ENCODE measurements at regions of chr17 and their contacts with region 1.

Region 1: DNA sequence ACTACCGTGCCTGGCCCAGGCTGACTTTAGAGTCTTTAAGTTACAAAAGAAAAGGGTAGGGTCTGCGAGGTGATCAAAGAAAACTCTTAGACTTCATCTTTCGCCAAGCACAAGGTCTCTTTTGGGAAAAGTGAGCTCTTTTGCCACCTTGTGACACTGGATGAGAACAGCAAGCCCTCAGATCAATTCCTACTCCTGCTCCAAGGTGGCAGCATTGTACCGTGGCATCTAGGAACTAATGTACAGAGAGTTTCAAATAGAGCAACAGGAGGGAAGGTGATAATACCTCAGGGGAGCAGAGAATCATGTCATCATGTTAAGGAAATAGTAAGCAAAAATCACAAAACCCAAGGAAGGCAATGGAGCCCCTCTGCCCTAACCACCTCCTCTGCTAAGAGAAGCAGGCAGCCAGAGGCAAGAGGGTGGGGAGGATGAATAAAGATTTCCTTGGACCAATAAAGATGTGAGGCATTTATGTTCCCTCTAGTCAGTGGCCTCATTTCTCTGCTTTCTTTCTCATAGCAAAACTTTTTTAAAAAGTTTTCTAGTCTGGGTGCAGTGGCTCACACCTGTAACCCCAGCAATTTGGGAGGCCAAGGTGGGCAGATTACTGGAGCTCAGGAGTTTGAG is 2.1 kb upstream of the C17orf78 start:
- DNase-seq: no peak
- H3K4me3 ChIP-seq: no peak overlapping the region
- H3K27me3 ChIP-seq: no peaks in the 10 kb centered on the region
- CTCF ChIP-seq: peak; percentile 99

Region 2: GRCh38 chr17:37239690-37240334 is 133.8 kb before region 1 on chr17:
- CTCF ChIA-PET with region 1: interaction called, 11 read pairs
- POLR2A ChIA-PET with region 1: no interaction called
- DNase-seq: no peak
- H3K4me3 ChIP-seq: no peak overlapping the region
- H3K27me3 ChIP-seq: no peaks in the 10 kb centered on the region
- CTCF ChIP-seq: peak; percentile 73

Region 3: GRCh38 chr17:37384560-37385149 is 11.0 kb after region 1 on chr17:
- CTCF ChIA-PET with region 1: interaction called, 13 read pairs
- POLR2A ChIA-PET with region 1: no interaction called
- DNase-seq: no peak
- H3K4me3 ChIP-seq: no peak overlapping the region
- H3K27me3 ChIP-seq: no peaks in the 10 kb centered on the region
- CTCF ChIP-seq: no peak

Region 4: DNA sequence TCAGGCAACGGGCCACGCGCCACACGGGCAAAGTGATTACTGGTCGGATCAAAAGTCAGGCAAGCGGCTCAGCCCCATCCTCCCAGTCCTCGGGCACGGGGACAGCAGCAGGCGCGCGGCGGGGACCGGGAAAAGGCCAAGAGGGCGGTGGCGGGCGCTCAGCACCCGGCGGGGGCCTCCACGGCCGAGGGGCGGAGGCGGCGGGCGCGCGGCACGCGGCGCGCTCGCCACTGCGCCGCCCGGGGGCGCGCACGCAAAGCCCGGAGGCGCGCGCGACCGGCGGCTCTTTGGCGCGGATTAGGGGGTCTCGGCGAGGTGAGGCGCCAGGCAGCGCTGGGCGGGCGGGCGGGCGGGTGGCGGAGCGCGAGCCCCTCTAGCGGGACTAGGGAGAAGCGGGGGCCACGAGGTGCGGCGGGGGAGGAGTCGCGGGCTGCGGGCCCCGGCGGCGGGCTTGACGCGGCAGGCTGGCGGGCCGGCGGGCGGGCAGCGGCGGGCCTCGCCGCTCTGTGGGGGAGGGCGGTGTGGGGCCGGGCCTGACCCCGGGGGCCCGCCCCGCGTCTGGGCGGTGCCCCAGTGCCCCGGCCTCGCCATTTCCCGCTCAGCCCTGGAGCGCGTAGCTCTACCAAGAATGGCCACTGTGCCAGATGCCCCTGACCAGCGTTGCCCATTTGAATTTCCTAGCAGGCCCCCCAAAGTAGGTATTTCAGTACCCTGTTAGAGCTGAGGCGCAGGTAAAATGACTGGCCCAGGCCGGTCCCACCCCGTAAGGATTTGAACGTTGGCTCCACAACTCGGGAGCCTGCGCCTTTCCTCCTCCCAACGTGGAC is 33.2 kb after region 1 on chr17 and contains the starts of genes ACACA and TADA2A:
- CTCF ChIA-PET with region 1: interaction called, 16 read pairs
- POLR2A ChIA-PET with region 1: no interaction called
- DNase-seq: no peak
- H3K4me3 ChIP-seq: peak within 1 kb of the TSS; percentile 93
- H3K27me3 ChIP-seq: no peaks in the 10 kb centered on the region
- CTCF ChIP-seq: peak; percentile 5; the same call in 1 of the 2 replicates
- polyA plus RNA-seq, gene ACACA: 26.9 and 32.4 TPM in 2 replicates
- polyA plus RNA-seq, gene TADA2A: 13.6 and 19.3 TPM in 2 replicates

Region 5: DNA sequence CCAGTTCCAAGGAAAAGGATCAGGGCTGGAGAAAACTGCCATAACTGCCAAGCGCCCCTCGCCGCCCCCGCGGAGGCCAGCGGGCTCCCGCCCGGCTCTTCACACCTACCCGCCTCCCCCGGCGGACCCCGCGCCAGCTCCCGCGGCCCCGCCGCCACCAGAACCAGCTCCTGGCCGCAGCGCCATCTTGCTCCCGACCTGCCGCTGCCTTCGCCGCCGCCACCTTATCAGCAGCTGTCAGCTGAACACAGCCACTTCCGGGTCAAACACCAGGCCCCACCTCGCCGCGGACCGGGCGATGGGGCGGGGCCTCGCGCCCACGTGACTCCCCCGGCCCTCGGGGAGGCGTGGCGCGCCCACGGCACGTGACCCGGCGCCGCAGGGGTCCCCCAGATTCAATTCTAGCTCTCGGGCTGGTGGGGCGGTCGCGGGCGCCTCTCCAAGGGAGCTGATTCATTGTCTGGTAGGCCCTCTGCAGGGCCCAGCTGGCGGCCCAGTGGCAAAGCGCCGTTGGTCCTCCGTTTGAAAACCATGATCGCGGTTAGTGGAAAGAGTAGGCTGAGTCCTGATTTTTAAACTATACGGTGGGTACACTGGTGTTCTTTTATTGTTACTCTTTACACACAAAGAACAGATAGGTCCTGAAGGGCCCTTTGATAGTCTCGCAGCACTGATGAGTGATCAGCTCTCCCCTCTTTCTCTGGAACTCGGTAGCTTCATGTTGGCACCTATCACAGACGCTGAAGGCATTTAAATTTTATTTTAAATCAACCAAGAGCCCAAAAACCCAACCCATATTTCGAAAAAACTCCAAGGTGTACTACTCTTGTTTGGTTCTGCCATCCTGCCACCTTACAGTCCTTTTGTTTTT is 235.8 kb after region 1 on chr17 and contains the start of gene SYNRG:
- CTCF ChIA-PET with region 1: interaction called, 12 read pairs
- POLR2A ChIA-PET with region 1: no interaction called
- DNase-seq: peak; percentile 76
- H3K4me3 ChIP-seq: peak within 1 kb of the TSS; percentile 91
- H3K27me3 ChIP-seq: no peaks in the 10 kb centered on the region
- CTCF ChIP-seq: peak; percentile 47; the same call in 1 of the 2 replicates
- polyA plus RNA-seq, gene SYNRG: 10.2 and 13.1 TPM in 2 replicates